ENCODE measurements at regions of chr3 and their contacts with region 1.

Region 1: GRCh38 chr3:51799879-51800749 is 21.1 kb upstream of the IQCF6 start:
- DNase-seq: no peak
- H3K4me3 ChIP-seq: no peak overlapping the region
- H3K27ac ChIP-seq: no peak overlapping the region
- H3K4me1 ChIP-seq: no peaks in the 10 kb centered on the region
- H3K27me3 ChIP-seq: no peaks in the 10 kb centered on the region
- CTCF ChIP-seq: peak; percentile 31 to 37 (median 35)
- EP300 ChIP-seq: no peak
- POLR2A ChIP-seq: no peak

Region 2: GRCh38 chr3:51508255-51508654 is 291.9 kb before region 1 on chr3:
- intact Hi-C with region 1: loop called in 2 of 4 experiments (anchors 5 to 10 kb)
- DNase-seq: no peak
- H3K4me3 ChIP-seq: no peak overlapping the region
- H3K27ac ChIP-seq: no peak overlapping the region
- H3K4me1 ChIP-seq: no peaks in the 10 kb centered on the region
- H3K27me3 ChIP-seq: no peaks in the 10 kb centered on the region
- CTCF ChIP-seq: no peak
- EP300 ChIP-seq: no peak
- POLR2A ChIP-seq: no peak

Region 3: GRCh38 chr3:51722362-51722761 is 77.8 kb before region 1 on chr3:
- intact Hi-C with region 1: no loop called
- DNase-seq: no peak
- H3K4me3 ChIP-seq: no peak overlapping the region
- H3K27ac ChIP-seq: no peak overlapping the region
- H3K4me1 ChIP-seq: no peaks in the 10 kb centered on the region
- H3K27me3 ChIP-seq: no peaks in the 10 kb centered on the region
- CTCF ChIP-seq: no peak
- EP300 ChIP-seq: no peak
- POLR2A ChIP-seq: no peak